Heart left ventricle (tissue), 16 donors: ENCODE measurements at regions of chr12 and their contacts with region 1.

Region 1: DNA sequence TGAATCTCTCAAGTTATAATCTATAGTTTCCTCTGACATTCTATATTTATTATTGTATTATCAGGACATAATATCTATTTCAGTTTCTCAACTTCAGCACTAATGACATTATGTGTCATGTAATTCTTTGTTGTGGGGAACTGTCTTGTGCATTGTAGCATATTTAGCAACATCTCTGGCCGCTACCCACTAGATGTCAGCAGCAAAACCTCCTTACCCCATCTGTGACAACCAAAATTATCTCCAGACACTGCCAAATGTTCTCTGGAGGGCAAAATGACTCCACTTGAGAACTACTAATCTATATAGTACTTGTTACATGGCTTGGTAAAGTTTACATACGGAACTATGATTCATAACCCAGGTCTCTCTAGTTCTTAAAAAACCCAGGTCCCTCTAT is 110.2 kb downstream of the RASSF9 start:
- DNase-seq: no peak
- ATAC-seq: no peak
- H3K4me3 ChIP-seq: no peak overlapping the region
- H3K27ac ChIP-seq: no peak overlapping the region
- H3K4me1 ChIP-seq: no peaks in the 10 kb centered on the region
- H3K27me3 ChIP-seq: no peaks in the 10 kb centered on the region
- CTCF ChIP-seq: peak in 3 of 12 donors; percentile 7 to 13 (median 11)
- POLR2A ChIP-seq: no peak

Region 2: DNA sequence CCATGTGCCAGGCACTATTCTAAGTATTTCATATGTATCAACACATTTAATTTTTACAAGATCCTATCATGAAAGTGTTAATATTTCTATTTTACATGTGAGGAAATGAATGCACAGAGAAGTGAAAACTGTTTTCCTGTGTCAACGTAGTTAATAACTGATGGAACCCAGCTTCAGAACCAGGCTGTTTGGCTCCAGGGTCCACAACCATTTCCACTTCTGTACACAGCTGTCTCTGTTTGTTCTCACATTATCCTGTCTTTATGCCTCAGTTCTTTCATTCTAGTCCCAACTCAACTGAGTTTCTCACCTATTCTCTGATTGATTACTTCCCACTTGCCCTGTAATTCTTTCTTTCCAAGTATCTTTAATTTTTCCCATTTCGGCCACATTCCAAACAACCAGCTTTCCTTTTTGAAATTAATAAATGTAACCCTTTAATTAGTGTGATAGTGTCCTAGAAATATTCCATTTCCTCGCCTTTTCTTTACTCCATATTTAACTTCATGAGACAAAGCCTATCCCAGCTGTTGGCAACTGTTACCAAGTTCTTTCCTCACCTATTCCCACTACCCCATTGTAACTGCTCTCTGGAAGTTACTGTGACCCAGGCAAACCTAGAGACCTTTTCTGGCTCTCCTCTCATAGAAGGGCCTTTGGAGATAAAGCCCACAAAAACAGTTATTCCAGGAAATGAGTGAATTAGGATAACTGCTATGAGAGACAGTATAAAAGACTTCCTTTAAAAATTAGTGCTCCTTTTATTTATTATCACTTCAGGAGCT is 108.5 kb before region 1 on chr12:
- intact Hi-C with region 1: loop called in 1 of 10 experiments (anchors 10 kb)
- DNase-seq: no peak
- ATAC-seq: no peak
- H3K4me3 ChIP-seq: no peak overlapping the region
- H3K27ac ChIP-seq: no peak overlapping the region
- H3K4me1 ChIP-seq: no peaks in the 10 kb centered on the region
- H3K27me3 ChIP-seq: no peaks in the 10 kb centered on the region
- CTCF ChIP-seq: no peak
- POLR2A ChIP-seq: no peak